Activated CD4-positive, alpha-beta memory T cell treated with anti-CD3 and anti-CD28 coated beads for 36 hours (primary cell): ENCODE measurements at regions of chr15 and their contacts with region 1.

Region 1: DNA sequence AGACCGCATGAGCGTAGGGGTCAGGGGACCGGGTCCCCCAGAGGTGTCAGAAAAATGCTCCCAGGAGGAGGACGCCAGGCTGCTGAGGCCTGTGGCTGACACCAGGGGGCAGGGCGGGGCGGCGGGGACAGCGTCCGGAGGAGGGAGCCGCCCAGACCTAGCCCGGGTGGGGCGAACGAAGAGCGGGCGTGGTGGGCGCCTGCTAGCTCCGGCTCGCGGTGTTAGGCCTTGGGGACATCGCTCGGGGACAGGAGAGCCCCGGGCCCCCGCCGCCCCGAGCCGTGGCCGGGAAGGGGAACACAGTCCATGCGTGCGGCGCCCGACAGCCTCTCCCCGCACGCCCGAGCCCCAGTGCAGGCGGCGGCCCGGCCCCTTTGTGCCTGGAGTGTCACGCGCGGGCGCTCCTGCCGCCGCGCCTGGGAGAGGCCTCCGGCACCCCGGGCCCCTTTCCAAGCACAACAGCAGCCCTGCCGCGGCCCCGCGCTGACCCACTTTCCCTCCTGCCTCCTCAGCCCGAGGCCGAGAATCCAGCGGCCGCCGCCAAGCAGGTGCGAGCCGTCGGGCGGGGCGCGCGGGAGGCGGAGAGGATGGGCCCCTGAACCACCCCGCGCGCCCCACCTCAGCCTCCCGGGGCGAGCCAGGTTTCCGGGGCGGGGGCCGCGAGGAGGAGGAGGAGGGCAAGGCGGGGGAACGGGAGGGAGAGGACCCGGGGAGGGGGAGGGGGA is 111.0 kb upstream of the KLF13 start:
- DNase-seq: peak; percentile 88
- H3K4me3 Mint-ChIP-seq: peak overlapping the region; percentile 68
- H3K27ac Mint-ChIP-seq: peak overlapping the region; percentile 56
- H3K4me1 Mint-ChIP-seq: peaks cover 15% of the 10 kb centered on the region
- H3K27me3 Mint-ChIP-seq: no peaks in the 10 kb centered on the region

Region 2: DNA sequence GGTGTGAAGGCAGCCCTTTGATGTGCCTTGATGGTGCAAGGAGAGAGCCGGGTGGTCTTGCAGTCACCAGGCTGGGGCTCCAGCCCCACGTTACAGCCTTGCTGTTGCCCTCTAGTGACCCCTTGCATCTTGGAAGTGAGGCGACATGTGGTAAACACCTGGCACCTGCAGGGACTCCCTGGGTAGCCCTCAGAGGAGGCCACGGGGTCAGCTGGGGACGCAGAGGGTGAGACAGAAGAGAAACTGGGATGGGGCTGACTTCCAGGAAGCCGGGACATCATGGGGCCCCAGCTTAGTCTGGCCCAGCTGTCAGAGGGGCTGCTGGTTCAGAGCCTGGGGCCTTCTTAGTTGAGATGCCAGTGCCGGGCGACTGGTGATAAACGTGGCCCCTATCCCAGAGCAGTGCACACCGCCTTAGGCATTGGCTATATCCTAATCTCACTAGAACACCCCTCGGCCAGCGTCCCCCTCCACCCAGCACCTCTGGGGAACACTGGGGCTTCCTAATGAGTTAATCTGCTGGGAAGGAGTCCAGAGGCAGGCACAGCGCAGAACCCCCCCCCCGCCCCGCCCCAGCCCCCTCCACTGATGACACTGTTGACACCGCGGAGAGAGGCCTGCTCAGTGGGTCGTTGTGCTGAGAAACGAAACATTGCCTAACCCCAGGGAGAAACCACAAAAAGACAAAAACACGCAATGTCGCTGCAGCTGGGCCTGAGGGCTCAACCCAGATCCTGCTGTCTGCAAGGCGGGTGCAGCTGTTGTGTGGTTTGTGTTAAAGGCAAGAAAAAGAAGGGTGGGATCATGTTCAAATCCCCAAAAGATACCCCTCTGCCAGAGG is 50.4 kb after region 1 on chr15:
- CTCF ChIA-PET with region 1: interaction called, 13 read pairs
- POLR2A ChIA-PET with region 1: no interaction called
- intact Hi-C with region 1: loop called (anchors 2 kb)
- DNase-seq: peak; percentile 82
- H3K4me3 Mint-ChIP-seq: peak overlapping the region; percentile 9
- H3K27ac Mint-ChIP-seq: peak overlapping the region; percentile 59
- H3K4me1 Mint-ChIP-seq: peaks cover 68% of the 10 kb centered on the region
- H3K27me3 Mint-ChIP-seq: no peaks in the 10 kb centered on the region

Region 3: GRCh38 chr15:31455499-31455898 is 239.8 kb after region 1 on chr15:
- CTCF ChIA-PET with region 1: no interaction called
- POLR2A ChIA-PET with region 1: no interaction called
- intact Hi-C with region 1: no loop called
- DNase-seq: peak; percentile 31
- H3K4me3 Mint-ChIP-seq: no peak overlapping the region
- H3K27ac Mint-ChIP-seq: no peak overlapping the region
- H3K4me1 Mint-ChIP-seq: peaks cover 32% of the 10 kb centered on the region
- H3K27me3 Mint-ChIP-seq: no peaks in the 10 kb centered on the region

Region 4: GRCh38 chr15:31483053-31483985 is 267.7 kb after region 1 on chr15:
- CTCF ChIA-PET with region 1: interaction called, 86 read pairs
- POLR2A ChIA-PET with region 1: interaction called, 3 read pairs
- intact Hi-C with region 1: loop called (anchors 1 kb)
- DNase-seq: peak; percentile 73
- H3K4me3 Mint-ChIP-seq: peak overlapping the region; percentile 92
- H3K27ac Mint-ChIP-seq: peak overlapping the region; percentile 91
- H3K4me1 Mint-ChIP-seq: peaks cover 61% of the 10 kb centered on the region
- H3K27me3 Mint-ChIP-seq: peaks cover 5% of the 10 kb centered on the region